ENCODE measurements at regions of chr5 and their contacts with region 1.

Region 1: DNA sequence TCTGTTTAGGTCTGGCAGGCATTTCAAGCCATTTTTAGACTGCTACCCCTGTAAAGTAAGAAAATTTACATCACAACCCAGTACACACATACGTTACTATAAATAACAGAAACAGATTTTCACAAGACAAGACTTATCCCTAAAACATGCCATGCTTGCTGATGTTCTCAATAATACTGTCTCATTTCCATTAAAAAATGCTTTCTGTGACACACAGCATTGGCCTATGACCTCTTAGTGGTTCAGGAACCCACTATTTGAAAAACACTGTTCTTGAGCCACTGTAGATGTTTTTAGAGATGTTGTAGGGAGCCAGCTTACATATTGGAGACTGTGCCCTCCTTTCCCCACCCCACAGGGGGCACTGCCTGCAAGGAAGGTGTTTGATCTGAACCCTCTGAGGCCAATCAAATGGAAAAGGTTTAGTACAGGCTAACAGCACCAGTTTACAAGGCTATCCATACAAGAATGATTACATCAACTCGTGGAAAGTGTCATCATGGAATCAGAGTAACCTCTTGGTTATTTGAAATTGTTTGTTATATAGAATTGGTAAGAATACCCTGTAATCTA is 30.8 kb downstream of the ZSWIM6 start:
- DNase-seq: no peak
- H3K4me3 ChIP-seq: no peak overlapping the region
- H3K27ac ChIP-seq: no peak overlapping the region
- H3K4me1 ChIP-seq: peaks cover 0 to 25% (median 2%) of the 10 kb centered on the region in 4 donors
- H3K27me3 ChIP-seq: no peaks in the 10 kb centered on the region
- CTCF ChIP-seq: no peak

Region 2: GRCh38 chr5:61379677-61380076 is 16.8 kb after region 1 on chr5:
- intact Hi-C with region 1: loop called (anchors 2 kb)
- DNase-seq: no peak
- H3K4me3 ChIP-seq: no peak overlapping the region
- H3K27ac ChIP-seq: no peak overlapping the region
- H3K4me1 ChIP-seq: no peaks in the 10 kb centered on the region
- H3K27me3 ChIP-seq: no peaks in the 10 kb centered on the region
- CTCF ChIP-seq: no peak

Region 3: GRCh38 chr5:62017092-62017491 is 654.2 kb after region 1 on chr5:
- intact Hi-C with region 1: loop called (anchors 10 kb)
- DNase-seq: no peak
- H3K4me3 ChIP-seq: no peak overlapping the region
- H3K27ac ChIP-seq: no peak overlapping the region
- H3K4me1 ChIP-seq: no peaks in the 10 kb centered on the region
- H3K27me3 ChIP-seq: no peaks in the 10 kb centered on the region
- CTCF ChIP-seq: no peak

Measured in tibial artery (tissue), 4 donors.